ENCODE measurements at regions of chr5 and their contacts with region 1.

Region 1: DNA sequence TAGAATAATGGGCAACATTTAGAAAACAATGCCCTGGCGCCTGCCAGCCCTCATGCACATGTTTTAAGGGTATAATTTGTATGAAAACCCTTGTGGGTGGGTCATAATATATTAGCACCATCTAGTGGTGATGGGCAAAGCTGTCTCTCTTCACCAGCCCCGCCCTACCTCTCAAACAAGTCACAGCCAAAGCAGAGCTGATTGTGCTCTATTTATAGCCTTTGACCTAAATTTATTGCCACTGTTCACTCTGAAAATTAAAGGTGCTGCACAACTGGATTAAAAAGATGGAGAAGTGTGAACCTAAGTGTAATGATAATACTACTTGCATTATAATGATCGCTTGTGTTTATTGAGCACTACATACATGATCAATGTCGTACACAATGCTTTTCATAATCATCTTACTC is 131.9 kb upstream of the ANKH start:
- DNase-seq: peak; percentile 67 to 81
- H3K4me3 ChIP-seq: no peak overlapping the region
- H3K4me1 ChIP-seq: peaks cover 8% of the 10 kb centered on the region
- H3K27me3 ChIP-seq: peaks cover 8% of the 10 kb centered on the region

Region 2: DNA sequence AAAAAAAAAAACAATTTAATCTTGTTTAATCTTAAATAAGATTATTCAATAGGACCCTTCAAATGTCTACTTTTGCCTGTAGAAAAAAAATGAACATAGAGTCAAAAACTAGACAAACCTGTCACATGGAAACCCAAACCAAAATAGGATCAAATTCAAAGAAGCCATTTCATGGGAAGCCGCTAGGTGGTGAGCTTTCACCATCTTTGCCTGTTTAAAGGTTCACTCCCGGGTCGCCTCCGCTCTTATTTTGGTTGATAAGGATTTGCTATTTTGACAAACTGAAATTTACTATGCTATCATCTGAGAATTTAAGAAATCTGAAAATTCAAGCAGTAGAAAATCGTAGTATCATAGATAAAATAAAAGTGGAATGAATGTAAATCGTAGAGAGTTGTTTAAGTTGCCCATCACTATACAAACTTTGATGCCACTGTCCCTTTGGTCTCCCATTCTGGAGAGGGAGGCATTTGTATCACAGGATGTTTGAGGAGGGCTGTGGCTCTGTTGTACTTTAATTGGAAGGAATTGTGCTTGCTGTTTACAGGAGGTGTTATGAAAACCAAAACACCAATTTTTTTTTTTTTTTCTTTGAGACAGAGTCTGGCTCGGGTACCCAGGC is 1015.6 kb before region 1 on chr5:
- in situ Hi-C with region 1: loop called (anchors 25 kb)
- DNase-seq: peak; percentile 61 to 66
- H3K4me3 ChIP-seq: no peak overlapping the region
- H3K4me1 ChIP-seq: no peaks in the 10 kb centered on the region
- H3K27me3 ChIP-seq: peaks cover 13% of the 10 kb centered on the region

Region 3: GRCh38 chr5:14351845-14352712 is 651.4 kb before region 1 on chr5:
- in situ Hi-C with region 1: loop called (anchors 25 kb)
- DNase-seq: peak; percentile 57 to 63
- H3K4me3 ChIP-seq: no peak overlapping the region
- H3K4me1 ChIP-seq: no peaks in the 10 kb centered on the region
- H3K27me3 ChIP-seq: no peaks in the 10 kb centered on the region

Region 4: DNA sequence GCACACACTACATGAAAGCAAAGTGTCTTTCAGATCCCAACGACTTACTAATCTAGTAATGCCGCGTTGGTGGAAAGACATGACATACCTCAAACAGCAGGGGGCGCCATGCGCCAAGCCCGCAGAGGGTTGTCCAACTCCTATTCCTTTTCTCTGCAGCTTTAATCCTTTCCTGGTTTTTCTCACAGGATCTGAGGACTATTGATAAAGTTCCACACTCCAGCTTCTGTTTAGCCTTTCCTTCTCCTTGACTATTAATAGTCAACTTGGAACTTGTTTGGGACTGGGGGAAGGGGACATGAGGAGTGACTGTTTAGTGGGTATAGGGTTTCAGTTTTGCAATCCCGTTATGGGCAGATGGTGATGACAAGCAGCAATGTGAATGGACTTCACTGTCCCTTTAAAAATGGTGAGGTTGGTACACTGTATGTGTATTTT is 276.1 kb before region 1 on chr5:
- in situ Hi-C with region 1: loop called (anchors 5 kb)
- DNase-seq: peak; percentile 81 to 87
- H3K4me3 ChIP-seq: no peak overlapping the region
- H3K4me1 ChIP-seq: peaks cover 15% of the 10 kb centered on the region
- H3K27me3 ChIP-seq: no peaks in the 10 kb centered on the region

Measured in HAP-1 (cell line).